K562 (cell line): ENCODE measurements at regions of chr19 and their contacts with region 1.

Region 1: DNA sequence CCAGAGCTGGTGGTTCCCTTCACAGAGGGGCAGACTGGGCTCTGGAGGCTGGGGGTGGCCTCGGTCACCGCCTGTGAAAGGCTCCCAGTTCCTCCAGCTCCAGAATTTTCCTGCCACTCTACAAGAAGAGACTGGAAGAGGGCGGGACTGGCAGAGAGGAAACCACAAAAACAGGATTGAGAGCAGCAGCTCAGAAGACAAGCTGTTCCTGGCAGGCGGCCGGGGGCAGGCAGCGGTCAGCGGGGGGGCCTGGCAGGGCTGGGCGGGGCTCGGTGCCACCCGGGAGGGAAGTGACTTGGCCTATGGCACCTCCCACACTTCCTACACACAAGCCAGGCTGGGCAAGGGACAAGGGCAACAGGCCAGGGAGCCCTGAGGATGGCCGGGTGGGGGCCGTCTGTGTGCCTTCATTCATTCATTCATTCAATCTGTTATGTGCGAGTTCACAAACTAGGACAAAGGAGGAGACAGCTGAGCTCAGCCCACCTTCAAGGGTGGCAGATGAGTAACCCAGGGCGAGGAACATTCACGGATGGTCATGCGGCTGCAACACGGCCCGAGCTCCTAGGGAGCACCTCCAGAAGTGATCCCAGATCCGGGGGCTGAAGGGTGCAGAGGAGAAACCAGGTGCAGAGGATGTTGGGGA is 16.9 kb upstream of the BTBD2 start:
- DNase-seq: no peak
- ATAC-seq: no peak
- H3K4me3 ChIP-seq: no peak overlapping the region
- H3K27ac ChIP-seq: no peak overlapping the region
- H3K4me1 ChIP-seq: peaks cover 3 to 37% of the 10 kb centered on the region in 2 experiments; a peak in 3 of 5 replicates
- H3K27me3 ChIP-seq: no peaks in the 10 kb centered on the region
- CTCF ChIP-seq: no peak
- EP300 ChIP-seq: no peak
- POLR2A ChIP-seq: no peak
- RAD21 ChIP-seq: no peak

Region 2: GRCh38 chr19:2050991-2051772 is 18.8 kb after region 1 on chr19 and contains the start of gene MKNK2:
- CTCF ChIA-PET with region 1: no interaction called
- POLR2A ChIA-PET with region 1: interaction called, 26 read pairs
- in situ Hi-C with region 1: no loop called
- intact Hi-C with region 1: no loop called
- DNase-seq: peak; percentile 87 to 97 (median 91)
- ATAC-seq: peak; percentile 72
- H3K4me3 ChIP-seq: peak within 1 kb of the TSS; percentile 90
- H3K27ac ChIP-seq: peak within 1 kb of the TSS; percentile 90
- H3K4me1 ChIP-seq: peaks cover 31 to 78% of the 10 kb centered on the region in 2 experiments
- H3K27me3 ChIP-seq: no peaks in the 10 kb centered on the region
- CTCF ChIP-seq: peak; percentile 72 to 88 (median 73)
- EP300 ChIP-seq: no peak
- POLR2A ChIP-seq: peak; percentile 90
- RAD21 ChIP-seq: peak in 1 of 2 experiments; percentile 29; a peak in 2 of 4 replicates
- polyA plus RNA-seq, gene MKNK2: 5.1 to 5.5 TPM